ENCODE measurements at regions of chr4 and their contacts with region 1.

Region 1: DNA sequence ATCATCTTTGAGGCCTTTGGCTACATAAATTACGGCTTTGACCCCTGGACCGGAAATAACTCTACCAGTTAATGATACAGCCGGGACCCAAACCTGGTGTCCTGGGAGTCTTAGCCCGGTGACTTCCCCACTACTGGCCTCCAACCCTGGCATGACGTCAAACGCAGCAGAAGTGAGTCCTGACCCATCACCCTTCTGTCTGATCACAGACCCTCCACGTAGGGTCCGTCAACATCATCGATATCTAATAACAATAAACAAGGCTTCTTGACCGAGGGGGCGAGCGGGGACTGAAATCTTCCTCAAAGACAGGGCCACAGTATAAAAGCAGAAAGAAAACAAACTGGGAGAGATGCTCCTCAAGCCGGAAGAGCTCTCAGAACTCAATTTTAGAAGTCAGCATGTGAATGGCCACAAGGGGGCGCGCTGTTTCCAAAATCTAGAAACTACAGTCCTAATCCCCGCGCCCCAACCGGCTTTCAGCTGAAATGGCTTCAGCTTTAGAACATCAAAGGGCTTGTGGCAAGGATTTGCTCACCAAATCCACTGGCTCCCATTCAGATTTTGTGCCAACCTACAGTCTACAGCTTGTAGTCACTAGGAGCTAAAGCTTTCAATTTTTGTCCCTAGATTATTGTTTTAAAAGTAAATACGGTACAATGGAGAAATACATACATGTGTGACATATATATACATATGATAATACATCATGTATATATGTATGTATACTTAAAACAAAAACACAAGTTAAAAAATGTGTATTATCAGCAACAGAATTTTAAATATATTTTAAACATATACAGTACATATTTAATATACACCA is 46.4 kb upstream of the ENPP6 start:
- DNase-seq: peak; percentile 29
- H3K4me3 ChIP-seq: no peak overlapping the region
- H3K27me3 ChIP-seq: no peaks in the 10 kb centered on the region
- CTCF ChIP-seq: peak; percentile 82

Region 2: GRCh38 chr4:184250795-184251669 is 13.1 kb before region 1 on chr4:
- CTCF ChIA-PET with region 1: interaction called, 39 read pairs
- POLR2A ChIA-PET with region 1: no interaction called
- DNase-seq: no peak
- H3K4me3 ChIP-seq: no peak overlapping the region
- H3K27me3 ChIP-seq: no peaks in the 10 kb centered on the region
- CTCF ChIP-seq: peak; percentile 59

Region 3: GRCh38 chr4:184287697-184288255 is 23.7 kb after region 1 on chr4:
- CTCF ChIA-PET with region 1: interaction called, 10 read pairs
- POLR2A ChIA-PET with region 1: no interaction called
- DNase-seq: no peak
- H3K4me3 ChIP-seq: no peak overlapping the region
- H3K27me3 ChIP-seq: no peaks in the 10 kb centered on the region
- CTCF ChIP-seq: 0 out of 2 replicates have a peak, but pooled peaks have one; percentile 32

Region 4: DNA sequence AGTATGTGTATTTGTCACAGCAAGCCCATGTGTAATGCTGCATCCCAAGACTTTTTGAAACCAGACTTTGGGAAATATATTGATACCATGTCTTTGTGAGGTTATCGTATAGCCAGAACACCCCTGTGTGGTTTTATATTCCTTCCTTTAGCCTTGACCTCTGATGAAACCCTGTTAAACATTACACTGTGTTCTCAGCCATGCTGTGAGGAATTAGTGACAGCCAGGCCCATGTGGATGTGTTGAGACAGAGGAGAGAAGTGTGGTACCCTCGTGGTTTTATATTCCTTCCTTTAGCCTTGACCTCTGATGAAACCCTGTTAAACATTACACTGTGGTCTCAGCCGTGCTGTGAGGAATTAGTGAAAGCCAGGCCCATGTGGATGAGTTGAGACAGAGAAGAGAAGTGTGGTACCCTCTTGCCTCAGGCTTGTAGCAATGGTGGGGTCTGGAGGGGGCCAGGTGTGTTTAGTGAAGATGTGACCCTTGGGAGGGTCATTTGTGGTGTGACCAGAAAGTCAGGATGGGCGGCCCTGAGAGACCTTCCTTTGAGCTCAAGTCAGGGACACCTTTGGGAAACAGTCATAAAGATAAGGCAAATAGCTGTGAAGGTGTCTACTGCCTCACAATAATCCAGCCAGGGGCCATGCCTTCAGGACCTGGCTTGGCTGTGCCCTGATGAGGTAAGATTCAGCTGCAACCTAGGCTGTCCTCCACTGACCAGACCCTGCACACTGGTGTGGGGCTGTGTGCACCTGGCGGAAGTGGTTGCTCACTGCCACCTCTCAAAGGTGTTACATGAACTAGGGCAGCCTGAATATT is 100.2 kb after region 1 on chr4:
- CTCF ChIA-PET with region 1: no interaction called
- POLR2A ChIA-PET with region 1: no interaction called
- DNase-seq: no peak
- H3K4me3 ChIP-seq: no peak overlapping the region
- H3K27me3 ChIP-seq: no peaks in the 10 kb centered on the region
- CTCF ChIP-seq: no peak

Region 5: DNA sequence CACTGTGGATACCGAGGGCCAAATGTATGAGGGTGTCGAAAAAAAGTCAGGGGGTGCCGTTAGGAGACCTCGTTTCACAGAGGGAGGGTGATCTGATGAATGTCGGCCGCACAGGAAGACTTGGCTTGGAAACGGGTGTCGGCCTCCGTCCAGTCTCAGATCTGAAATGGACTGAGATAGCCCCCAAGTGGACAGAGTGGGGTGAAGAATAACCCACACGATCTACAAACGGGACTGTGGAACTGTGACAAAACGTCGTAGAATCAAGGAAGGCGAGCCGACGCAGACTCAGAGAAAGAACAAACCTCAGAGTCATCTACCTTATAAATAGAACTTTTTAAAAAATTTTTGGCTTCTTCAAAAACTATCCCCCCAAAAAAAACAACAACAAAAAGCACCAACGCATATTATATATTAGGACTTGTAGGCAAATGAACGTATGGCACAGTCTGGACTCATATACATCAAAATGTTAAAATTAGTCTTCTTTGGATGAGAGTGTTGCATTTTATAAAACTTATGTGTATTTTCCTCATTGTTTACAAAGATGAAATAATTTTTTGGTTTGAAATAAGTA is 274.0 kb after region 1 on chr4:
- CTCF ChIA-PET with region 1: interaction called, 49 read pairs
- POLR2A ChIA-PET with region 1: interaction called, 4 read pairs
- DNase-seq: peak; percentile 34
- H3K4me3 ChIP-seq: peak overlapping the region; percentile 63
- H3K27me3 ChIP-seq: no peaks in the 10 kb centered on the region
- CTCF ChIP-seq: peak; percentile 78

Measured in BJ (cell line).